Natural killer cell (primary cell): ENCODE measurements at regions of chr4 and their contacts with region 1.

Region 1: DNA sequence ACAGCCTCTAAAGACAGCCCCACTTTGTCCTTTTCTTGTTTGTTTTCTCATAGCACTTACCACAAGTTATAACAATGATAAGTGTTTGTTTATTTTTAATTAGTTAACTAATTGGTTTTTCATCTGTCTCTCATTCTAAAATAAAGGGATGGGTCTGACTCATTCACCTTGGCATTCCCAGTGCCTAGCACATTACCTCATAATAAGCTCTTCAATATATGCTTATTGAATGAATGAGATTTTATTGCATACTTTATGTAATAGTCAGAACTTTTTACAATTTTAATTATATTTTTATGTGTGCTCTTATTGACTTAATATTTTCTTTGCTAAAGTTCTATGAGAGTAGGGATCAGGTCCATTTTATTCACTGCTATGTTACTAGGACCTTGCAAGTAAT is 22.8 kb upstream of the PRKG2 start:
- DNase-seq: no peak
- ATAC-seq: no peak
- H3K4me3 ChIP-seq: no peak overlapping the region
- H3K4me3 Mint-ChIP-seq: no peak overlapping the region
- H3K27ac ChIP-seq: no peak overlapping the region
- H3K27ac Mint-ChIP-seq: no peak overlapping the region
- H3K4me1 ChIP-seq: no peaks in the 10 kb centered on the region
- H3K4me1 Mint-ChIP-seq: no peaks in the 10 kb centered on the region
- H3K27me3 ChIP-seq: no peaks in the 10 kb centered on the region
- H3K27me3 Mint-ChIP-seq: peaks cover 0 to 4% of the 10 kb centered on the region in 2 donors
- CTCF ChIP-seq: no peak

Region 2: GRCh38 chr4:80731996-80732395 is 505.8 kb before region 1 on chr4:
- intact Hi-C with region 1: loop called (anchors 5 kb)
- DNase-seq: no peak
- ATAC-seq: no peak
- H3K4me3 ChIP-seq: no peak overlapping the region
- H3K4me3 Mint-ChIP-seq: no peak overlapping the region
- H3K27ac ChIP-seq: no peak overlapping the region
- H3K27ac Mint-ChIP-seq: no peak overlapping the region
- H3K4me1 ChIP-seq: no peaks in the 10 kb centered on the region
- H3K4me1 Mint-ChIP-seq: no peaks in the 10 kb centered on the region
- H3K27me3 ChIP-seq: no peaks in the 10 kb centered on the region
- H3K27me3 Mint-ChIP-seq: peaks cover 3 to 10% of the 10 kb centered on the region in 2 donors
- CTCF ChIP-seq: no peak

Region 3: DNA sequence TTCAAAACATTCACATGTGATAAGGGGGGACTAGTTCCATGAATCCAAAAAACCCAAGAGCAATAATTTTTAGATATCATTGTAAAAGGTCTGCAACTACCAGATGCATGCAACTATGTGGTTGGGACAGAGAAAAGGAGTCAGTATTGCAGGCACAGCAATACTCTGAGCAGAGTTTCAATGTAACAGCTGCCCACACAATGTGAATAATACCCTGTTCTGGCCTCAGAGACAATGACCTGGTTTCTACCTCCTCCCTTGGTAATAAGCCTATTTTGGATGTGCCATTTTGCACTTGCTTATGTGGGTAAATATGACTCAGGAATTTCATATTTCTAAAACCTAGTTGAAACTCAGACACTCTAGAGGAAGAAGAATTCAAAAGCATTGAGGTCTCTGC is 428.7 kb after region 1 on chr4:
- intact Hi-C with region 1: no loop called
- DNase-seq: no peak
- ATAC-seq: no peak
- H3K4me3 ChIP-seq: no peak overlapping the region
- H3K4me3 Mint-ChIP-seq: no peak overlapping the region
- H3K27ac ChIP-seq: no peak overlapping the region
- H3K27ac Mint-ChIP-seq: no peak overlapping the region
- H3K4me1 ChIP-seq: no peaks in the 10 kb centered on the region
- H3K4me1 Mint-ChIP-seq: no peaks in the 10 kb centered on the region
- H3K27me3 ChIP-seq: no peaks in the 10 kb centered on the region
- H3K27me3 Mint-ChIP-seq: peaks cover 0 to 7% of the 10 kb centered on the region in 2 donors
- CTCF ChIP-seq: no peak